Activated CD4-positive, alpha-beta T cell treated with anti-CD3 and anti-CD28 coated beads for 36 hours (primary cell): ENCODE measurements at regions of chr4 and their contacts with region 1.

Region 1: DNA sequence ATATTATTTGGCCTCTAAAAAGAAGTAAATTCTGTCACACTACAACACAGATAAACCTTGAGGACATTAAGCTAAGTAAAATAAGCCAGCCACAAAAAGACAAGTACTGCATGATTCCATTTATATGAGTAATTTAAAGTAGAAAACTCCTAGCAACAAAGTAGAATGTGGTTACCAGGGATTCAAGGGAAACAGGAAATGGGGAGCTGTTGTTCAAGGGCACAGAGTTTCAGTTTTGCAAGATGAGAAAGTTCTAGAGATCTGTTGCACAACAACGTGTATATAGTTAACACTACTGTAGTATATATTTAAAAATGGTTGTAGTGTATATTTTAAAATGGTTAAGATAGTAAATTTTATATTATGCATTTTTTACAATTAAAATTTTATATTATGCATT is 25.4 kb downstream of the SEC31A start:
- DNase-seq: peak; percentile 18
- ATAC-seq: peak; percentile 71
- H3K4me3 Mint-ChIP-seq: no peak overlapping the region
- H3K27ac Mint-ChIP-seq: peak overlapping the region; percentile 69
- H3K4me1 Mint-ChIP-seq: peaks cover 27% of the 10 kb centered on the region
- H3K27me3 Mint-ChIP-seq: no peaks in the 10 kb centered on the region

Region 2: GRCh38 chr4:82851885-82852750 is 13.5 kb before region 1 on chr4:
- CTCF ChIA-PET with region 1: interaction called, 14 read pairs
- POLR2A ChIA-PET with region 1: no interaction called
- intact Hi-C with region 1: no loop called
- DNase-seq: no peak
- ATAC-seq: peak; percentile 65
- H3K4me3 Mint-ChIP-seq: no peak overlapping the region
- H3K27ac Mint-ChIP-seq: peak overlapping the region; percentile 73
- H3K4me1 Mint-ChIP-seq: peaks cover 3% of the 10 kb centered on the region
- H3K27me3 Mint-ChIP-seq: no peaks in the 10 kb centered on the region

Region 3: DNA sequence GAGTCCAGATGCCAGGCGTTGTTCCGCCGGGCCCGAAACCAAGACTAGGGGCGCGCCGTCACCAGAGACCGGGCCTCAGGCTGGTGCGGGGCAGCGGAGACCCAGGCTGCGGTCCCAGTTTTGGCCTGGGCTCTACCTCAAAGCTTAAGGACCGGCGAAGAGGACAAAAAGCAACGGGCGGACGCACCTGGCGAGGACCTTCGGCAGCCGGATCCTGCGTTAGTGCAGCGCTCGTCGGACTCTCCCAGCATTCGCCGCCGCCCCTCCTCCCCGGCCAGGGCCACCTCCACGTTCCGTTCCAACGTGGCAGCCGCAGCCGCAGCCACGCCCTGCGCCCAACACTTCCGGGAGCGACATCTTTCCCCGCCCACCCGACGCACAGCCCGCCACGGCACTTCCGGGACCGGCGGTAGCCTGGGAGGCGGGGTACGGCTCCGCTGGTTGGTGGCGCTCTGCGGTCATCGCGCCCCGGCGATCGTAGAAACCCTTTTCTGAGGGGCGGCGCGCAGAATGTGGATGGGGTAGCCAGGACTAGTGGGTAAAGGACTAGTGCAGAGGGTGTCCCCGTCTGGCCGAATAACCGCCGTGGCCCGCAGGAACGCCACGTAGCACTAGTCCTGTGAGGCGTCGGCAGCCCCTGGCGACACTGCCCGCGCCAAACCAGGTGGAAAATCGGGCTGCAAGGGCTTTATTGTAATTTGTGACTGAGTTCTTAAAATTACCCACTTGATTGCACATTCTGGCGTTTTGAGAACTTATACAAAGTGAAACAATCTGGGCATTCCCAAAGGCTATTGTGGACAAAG is 25.5 kb after region 1 on chr4 and contains the start of gene SEC31A:
- CTCF ChIA-PET with region 1: interaction called, 3 read pairs
- POLR2A ChIA-PET with region 1: interaction called, 6 read pairs
- intact Hi-C with region 1: loop called (anchors 1 to 2 kb)
- DNase-seq: peak; percentile 99
- ATAC-seq: peak; percentile 94
- H3K4me3 Mint-ChIP-seq: peak within 1 kb of the TSS; percentile 81
- H3K27ac Mint-ChIP-seq: peak within 1 kb of the TSS; percentile 89
- H3K4me1 Mint-ChIP-seq: peaks cover 42% of the 10 kb centered on the region
- H3K27me3 Mint-ChIP-seq: no peaks in the 10 kb centered on the region
- total RNA-seq, gene SEC31A: 80.3 to 124 TPM